ENCODE measurements at regions of chr7 and their contacts with region 1.

Region 1: DNA sequence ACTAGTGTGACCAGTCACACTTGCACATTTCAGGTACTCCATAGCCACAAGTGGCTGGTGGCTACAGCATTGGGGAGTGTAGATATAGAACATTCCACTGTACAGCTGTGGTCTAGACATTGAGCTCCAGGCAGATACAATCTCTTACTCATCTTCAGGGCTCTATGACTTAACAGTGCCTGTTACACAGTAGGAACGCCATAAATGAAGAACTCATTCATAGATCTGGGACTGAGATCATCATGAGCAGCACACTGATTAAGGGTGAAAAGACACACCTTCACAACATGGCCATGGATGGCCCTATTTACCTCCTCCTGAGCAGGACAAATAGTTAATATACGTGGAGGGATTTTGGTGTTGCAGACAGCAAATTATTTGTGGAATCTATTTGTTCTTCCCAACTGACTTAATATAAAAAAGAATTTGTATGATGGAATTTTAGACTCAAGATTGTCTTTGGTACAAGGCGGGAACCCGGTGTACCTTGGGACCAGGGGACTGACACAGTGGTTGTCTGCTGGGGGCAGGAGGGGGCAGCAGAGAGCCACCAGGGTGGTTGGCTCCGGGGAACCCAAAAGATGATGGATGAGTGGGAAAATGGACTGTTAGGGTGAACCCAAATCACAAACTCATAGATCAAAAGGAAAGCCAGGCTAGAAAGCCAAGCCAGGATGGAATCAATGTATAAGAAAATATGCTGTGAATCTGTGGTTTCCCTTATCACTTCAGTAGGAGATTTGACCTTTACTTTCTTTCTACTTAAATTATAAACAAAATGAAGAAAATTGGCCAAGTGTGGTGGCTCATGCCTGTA is 24.3 kb upstream of the CPA2 start:
- DNase-seq: peak; percentile 71
- ATAC-seq: peak; percentile 84
- H3K4me3 Mint-ChIP-seq: no peak overlapping the region
- H3K27ac Mint-ChIP-seq: no peak overlapping the region
- H3K4me1 Mint-ChIP-seq: peaks cover 18% of the 10 kb centered on the region
- H3K27me3 Mint-ChIP-seq: peaks cover 20% of the 10 kb centered on the region

Region 2: GRCh38 chr7:130758429-130759056 is 516.1 kb after region 1 on chr7:
- CTCF ChIA-PET with region 1: interaction called, 11 read pairs
- DNase-seq: no peak
- ATAC-seq: no peak
- H3K4me3 Mint-ChIP-seq: no peak overlapping the region
- H3K27ac Mint-ChIP-seq: no peak overlapping the region
- H3K4me1 Mint-ChIP-seq: no peaks in the 10 kb centered on the region
- H3K27me3 Mint-ChIP-seq: peaks cover 21% of the 10 kb centered on the region